OCI-LY7 (cell line): ENCODE measurements at regions of chr5 and their contacts with region 1.

Region 1: GRCh38 chr5:149960272-149961185 is at the start of gene SLC26A2:
- DNase-seq: peak; percentile 94
- H3K4me3 ChIP-seq: peak within 1 kb of the TSS; percentile 72
- H3K27ac ChIP-seq: no peak within 1 kb of the TSS
- H3K4me1 ChIP-seq: peaks cover 9% of the 10 kb centered on the region
- CTCF ChIP-seq: no peak
- total RNA-seq, gene SLC26A2: 1.2 and 2.1 TPM in 2 replicates

Region 2: GRCh38 chr5:149834246-149834855 is 126.2 kb before region 1 on chr5:
- CTCF ChIA-PET with region 1: no interaction called
- POLR2A ChIA-PET with region 1: interaction called, 3 read pairs
- intact Hi-C with region 1: loop called (anchors 10 kb)
- DNase-seq: peak; percentile 73
- H3K4me3 ChIP-seq: no peak overlapping the region
- H3K27ac ChIP-seq: no peak overlapping the region
- H3K4me1 ChIP-seq: no peaks in the 10 kb centered on the region
- CTCF ChIP-seq: peak; percentile 84

Region 3: GRCh38 chr5:149860801-149861322 is 99.7 kb before region 1 on chr5:
- CTCF ChIA-PET with region 1: no interaction called
- POLR2A ChIA-PET with region 1: no interaction called
- intact Hi-C with region 1: loop called (anchors 5 kb)
- DNase-seq: peak; percentile 78
- H3K4me3 ChIP-seq: peak overlapping the region; percentile 24
- H3K27ac ChIP-seq: peak overlapping the region; percentile 52
- H3K4me1 ChIP-seq: peaks cover 26% of the 10 kb centered on the region
- CTCF ChIP-seq: no peak

Region 4: DNA sequence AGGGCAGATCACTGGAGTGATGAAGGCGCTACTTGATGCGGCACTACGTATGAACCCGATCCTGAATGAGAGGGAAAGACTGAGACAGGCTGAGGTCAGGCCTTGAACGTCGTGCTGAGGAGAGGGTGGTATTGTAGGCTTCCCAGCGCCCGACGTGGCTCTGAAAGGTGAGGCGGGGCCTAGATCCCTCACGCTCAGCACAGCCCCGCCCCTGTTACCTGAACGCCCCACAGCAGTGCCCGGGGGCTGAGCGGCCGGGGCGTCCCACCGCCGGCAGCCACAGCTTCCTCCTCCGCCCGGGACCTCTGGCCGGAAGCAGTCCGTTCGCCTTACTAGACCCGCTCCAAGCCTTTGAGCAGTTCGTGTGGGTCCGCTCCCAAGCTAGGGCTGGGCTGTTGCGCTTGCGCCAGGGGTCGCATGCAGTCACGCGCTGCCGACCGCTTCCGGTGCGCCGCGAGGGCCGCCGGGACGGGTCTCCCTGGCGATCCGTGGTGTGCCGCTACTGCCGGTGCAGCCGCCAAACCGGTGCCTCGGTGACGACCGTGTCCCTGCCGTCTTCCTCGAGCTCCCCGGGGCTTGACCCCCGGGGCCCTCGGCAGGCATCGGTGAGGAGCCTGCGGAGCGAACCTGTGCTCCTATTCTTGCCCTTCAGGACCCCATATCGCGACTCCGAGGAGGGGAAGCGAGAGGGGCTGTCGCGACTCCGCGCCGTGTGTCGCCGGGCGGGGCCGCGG is 39.9 kb after region 1 on chr5 and contains the starts of genes HMGXB3 and TIGD6:
- CTCF ChIA-PET with region 1: no interaction called
- POLR2A ChIA-PET with region 1: interaction called, 3 read pairs
- intact Hi-C with region 1: loop called (anchors 2 kb)
- DNase-seq: peak; percentile 96
- H3K4me3 ChIP-seq: peak within 1 kb of the TSS; percentile 83
- H3K27ac ChIP-seq: peak within 1 kb of the TSS; percentile 66
- H3K4me1 ChIP-seq: peaks cover 27% of the 10 kb centered on the region
- CTCF ChIP-seq: no peak
- total RNA-seq, gene HMGXB3: 35.1 and 40.4 TPM in 2 replicates
- total RNA-seq, gene TIGD6: 3.4 and 5.4 TPM in 2 replicates